ENCODE measurements at regions of chr6 and their contacts with region 1.

Region 1: GRCh38 chr6:37169496-37170272 is at the start of gene PIM1:
- DNase-seq: peak; percentile 98
- H3K27ac ChIP-seq: peak within 1 kb of the TSS; percentile 96
- CTCF ChIP-seq: no peak

Region 2: DNA sequence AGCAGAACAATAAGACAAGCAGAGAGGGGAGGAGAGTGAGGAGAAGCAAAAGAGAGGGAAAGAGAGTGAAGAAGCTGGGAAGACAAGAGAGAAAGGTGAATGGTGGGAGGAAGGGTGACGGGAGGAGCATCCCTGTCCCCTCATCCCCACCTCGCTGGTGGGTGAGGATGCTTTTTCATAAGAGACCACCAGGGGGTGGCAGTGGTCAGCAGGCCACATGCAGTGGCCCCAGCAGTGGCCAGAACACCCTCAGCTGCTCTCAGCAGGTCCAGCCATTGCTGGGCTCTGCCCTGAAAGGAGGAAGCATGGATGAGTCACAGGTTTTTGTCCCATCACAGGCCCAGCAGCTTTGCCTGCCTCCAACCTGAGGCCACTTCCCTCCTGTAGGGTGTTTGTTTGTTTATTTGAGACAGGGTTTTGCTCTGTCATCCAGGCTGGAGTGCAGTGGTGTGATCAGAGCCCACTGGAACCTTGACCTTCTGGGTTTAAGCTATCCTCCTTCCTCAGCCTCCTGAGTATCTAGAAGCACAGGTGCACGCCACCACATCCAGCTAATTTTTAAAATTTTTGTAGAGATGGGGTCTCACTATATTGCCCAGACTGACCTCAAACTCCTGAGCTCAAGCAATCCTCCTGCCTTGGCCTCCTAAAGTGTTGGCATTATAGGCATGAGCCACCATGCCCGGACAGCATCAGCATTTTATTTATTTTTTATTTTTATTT is 140.3 kb before region 1 on chr6:
- CTCF ChIA-PET with region 1: interaction called, 33 read pairs
- POLR2A ChIA-PET with region 1: interaction called, 3 read pairs
- DNase-seq: no peak
- H3K27ac ChIP-seq: peak overlapping the region; percentile 11; the same call in 1 of the 2 replicates
- CTCF ChIP-seq: peak; percentile 24; the same call in 1 of the 2 replicates

Region 3: GRCh38 chr6:37051138-37052026 is 118.3 kb before region 1 on chr6:
- CTCF ChIA-PET with region 1: interaction called, 64 read pairs
- POLR2A ChIA-PET with region 1: interaction called, 11 read pairs
- DNase-seq: peak; percentile 70
- H3K27ac ChIP-seq: no peak overlapping the region
- CTCF ChIP-seq: peak; percentile 87

Region 4: DNA sequence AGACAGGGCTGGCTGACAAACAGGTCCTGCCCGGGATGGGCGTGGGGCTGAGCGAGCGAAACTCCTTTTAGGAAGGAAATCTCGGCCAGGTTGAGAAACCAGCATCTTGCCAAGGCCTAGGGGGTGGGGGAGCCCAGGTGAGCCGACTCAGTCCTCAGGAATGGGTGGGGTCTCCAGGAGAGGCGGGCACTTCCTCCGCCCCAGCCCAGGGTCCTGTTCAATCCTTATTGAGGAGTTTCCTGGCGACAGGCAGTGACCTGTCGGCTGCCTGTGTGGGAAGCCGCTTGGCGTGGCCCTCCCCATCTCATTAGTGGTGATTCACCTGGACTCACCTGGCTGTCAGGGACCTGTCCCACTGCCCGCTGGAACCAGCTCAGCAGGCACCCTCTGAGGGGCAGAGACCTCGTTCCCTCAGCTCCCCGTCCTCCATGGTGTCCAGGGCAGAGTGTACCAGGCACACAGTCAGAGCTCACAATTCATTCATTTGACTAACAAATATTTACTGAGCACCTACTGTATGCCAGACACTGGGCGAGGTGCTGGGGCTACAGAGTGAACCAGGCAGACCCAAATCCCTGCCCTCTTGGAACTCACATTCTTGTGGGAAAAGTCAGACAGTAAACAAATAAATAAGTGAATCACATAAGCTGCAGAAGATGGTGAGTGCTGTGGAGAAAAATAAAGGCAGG is 113.1 kb before region 1 on chr6:
- CTCF ChIA-PET with region 1: interaction called, 64 read pairs
- POLR2A ChIA-PET with region 1: interaction called, 11 read pairs
- DNase-seq: peak; percentile 95
- H3K27ac ChIP-seq: peak overlapping the region; percentile 80
- CTCF ChIP-seq: no peak